HepG2 (cell line): ENCODE measurements at regions of chr6 and their contacts with region 1.

Region 1: DNA sequence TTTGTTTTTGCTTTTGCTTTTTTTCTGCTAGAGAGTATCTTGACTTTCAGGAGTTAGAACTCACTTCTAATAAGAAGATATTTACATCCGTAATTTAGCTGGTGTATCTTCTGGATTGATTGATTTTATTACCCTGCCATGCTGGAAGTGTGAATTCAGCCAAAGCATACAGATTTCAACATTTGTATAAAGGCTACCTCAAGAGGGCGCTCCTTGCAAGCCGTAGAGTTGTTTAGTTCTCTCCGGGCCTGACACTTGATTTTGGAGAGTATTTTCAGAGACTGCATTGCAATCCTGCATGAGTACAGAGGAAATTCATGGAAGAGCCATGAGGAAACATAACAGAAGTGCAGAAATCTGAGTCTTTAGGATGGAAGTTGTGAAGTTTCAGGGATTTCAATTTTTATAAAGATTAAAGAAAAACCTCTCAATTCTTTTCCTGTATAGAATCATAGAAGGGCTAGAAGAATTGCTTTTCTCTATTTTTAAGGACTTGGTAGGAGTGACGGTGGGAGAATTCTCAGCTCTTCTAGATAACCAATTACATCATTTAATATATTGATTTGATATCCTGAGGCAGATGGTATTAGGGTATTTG is 66.7 kb upstream of the TIAM2 start:
- DNase-seq: peak; percentile 73
- ATAC-seq: peak; percentile 78
- H3K4me3 ChIP-seq: no peak overlapping the region
- H3K27ac ChIP-seq: no peak overlapping the region
- H3K4me1 ChIP-seq: peaks cover 25% of the 10 kb centered on the region
- H3K27me3 ChIP-seq: no peaks in the 10 kb centered on the region
- CTCF ChIP-seq: peak; percentile 93
- EP300 ChIP-seq: no peak
- POLR2A ChIP-seq: no peak
- RAD21 ChIP-seq: peak; percentile 95

Region 2: DNA sequence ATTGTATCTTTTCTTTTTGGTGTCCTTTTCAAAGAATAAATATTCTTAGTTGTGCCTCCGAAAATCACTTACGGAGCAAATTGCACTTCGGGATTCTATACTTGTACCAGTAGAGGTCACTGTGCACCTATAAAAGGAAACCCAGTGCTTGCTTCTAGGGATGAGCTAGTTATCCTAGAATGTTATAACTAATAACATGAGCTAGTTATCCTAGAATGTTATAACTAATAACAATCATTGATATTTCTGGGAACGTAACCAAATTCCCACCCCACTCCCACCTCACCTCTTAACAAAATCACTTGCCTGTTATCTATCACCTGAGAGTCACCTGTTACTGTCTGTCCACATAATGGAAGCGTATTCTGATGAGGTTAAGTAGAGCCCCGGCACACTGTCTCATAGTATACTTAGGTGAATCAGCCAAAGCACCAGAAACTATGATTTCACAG is 60.3 kb before region 1 on chr6:
- CTCF ChIA-PET with region 1: interaction called, 6 read pairs
- POLR2A ChIA-PET with region 1: no interaction called
- in situ Hi-C with region 1: no loop called
- intact Hi-C with region 1: loop called (anchors 1 kb)
- DNase-seq: peak; percentile 79
- ATAC-seq: peak; percentile 41
- H3K4me3 ChIP-seq: no peak overlapping the region
- H3K27ac ChIP-seq: no peak overlapping the region
- H3K4me1 ChIP-seq: peaks cover 15% of the 10 kb centered on the region
- H3K27me3 ChIP-seq: no peaks in the 10 kb centered on the region
- CTCF ChIP-seq: peak; percentile 79
- EP300 ChIP-seq: no peak
- POLR2A ChIP-seq: no peak
- RAD21 ChIP-seq: peak; percentile 80

Region 3: DNA sequence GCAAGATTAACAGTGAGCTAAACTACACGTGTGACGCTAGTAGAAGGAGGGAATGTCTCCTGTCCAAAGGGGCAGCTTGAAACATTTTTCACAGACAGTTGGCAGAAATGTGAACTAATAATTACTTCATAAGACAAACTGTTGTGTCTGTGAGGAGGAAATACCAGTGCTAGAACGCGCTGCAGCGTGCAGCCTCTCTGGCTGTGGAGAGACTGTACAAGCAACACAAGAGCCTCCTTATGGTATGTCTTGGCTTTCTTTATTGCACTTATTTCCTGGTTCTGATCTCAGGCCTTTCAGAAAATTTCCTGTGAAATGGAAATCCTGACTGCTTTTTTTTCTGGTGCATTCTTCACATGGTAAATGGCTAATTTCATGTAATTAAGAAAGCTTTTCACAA is 41.4 kb after region 1 on chr6:
- CTCF ChIA-PET with region 1: no interaction called
- POLR2A ChIA-PET with region 1: no interaction called
- in situ Hi-C with region 1: no loop called
- intact Hi-C with region 1: no loop called
- DNase-seq: no peak
- ATAC-seq: no peak; the same call in 2 of the 3 replicates
- H3K4me3 ChIP-seq: no peak overlapping the region
- H3K27ac ChIP-seq: no peak overlapping the region
- H3K4me1 ChIP-seq: peaks cover 16% of the 10 kb centered on the region
- H3K27me3 ChIP-seq: no peaks in the 10 kb centered on the region
- CTCF ChIP-seq: no peak
- EP300 ChIP-seq: no peak
- POLR2A ChIP-seq: no peak
- RAD21 ChIP-seq: no peak

Region 4: DNA sequence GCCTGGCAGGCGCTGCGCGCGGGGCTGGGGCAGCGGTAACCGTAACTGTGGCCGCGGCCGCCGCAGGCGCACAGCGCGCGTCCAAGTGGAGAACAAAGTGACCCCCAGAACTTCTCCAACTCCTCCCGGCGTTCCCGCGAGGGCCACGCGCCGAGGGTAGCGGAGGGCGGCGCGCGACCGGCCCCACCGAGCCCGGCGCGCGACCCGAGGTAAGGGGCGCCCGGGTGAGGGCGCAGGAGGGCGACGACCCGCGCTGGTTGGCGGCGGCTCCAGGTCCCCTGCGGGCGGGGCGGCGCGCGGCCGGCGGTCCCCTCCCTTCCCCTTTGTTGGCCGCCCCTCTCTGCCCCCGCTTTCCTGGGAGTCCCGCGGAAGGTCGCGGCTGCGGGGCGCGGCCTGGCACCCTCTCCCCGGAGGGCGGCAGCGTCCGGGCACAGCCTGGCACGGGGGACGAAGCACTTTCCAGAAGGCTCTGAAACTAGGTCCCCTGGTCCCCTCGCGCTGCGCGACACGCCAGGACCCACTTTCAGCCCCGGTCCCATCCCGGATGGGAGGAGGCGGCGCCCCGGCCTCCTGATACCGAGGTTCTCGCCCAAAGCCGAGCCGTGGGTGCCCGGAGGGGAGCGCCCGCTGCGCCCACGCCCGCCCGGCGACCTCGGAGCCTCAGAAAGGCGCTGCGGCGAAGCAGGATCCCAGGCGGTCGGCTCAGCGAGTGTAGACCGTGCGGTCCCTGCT is 67.0 kb after region 1 on chr6 and contains the start of gene TIAM2:
- CTCF ChIA-PET with region 1: interaction called, 3 read pairs
- POLR2A ChIA-PET with region 1: no interaction called
- in situ Hi-C with region 1: no loop called
- intact Hi-C with region 1: loop called (anchors 2 kb)
- DNase-seq: no peak
- ATAC-seq: peak; percentile 82
- H3K4me3 ChIP-seq: peak within 1 kb of the TSS; percentile 63 to 80 (median 72)
- H3K27ac ChIP-seq: no peak within 1 kb of the TSS
- H3K4me1 ChIP-seq: peaks cover 32% of the 10 kb centered on the region
- H3K27me3 ChIP-seq: peaks cover 2 to 19% of the 10 kb centered on the region in 2 experiments; a peak in 3 of 5 replicates
- CTCF ChIP-seq: no peak; the same call in 1 of the 2 replicates
- EP300 ChIP-seq: no peak
- POLR2A ChIP-seq: no peak
- RAD21 ChIP-seq: peak; percentile 16; the same call in 1 of the 2 replicates
- total RNA-seq, gene TIAM2: 4.5 and 5.7 TPM in 2 replicates

Region 5: DNA sequence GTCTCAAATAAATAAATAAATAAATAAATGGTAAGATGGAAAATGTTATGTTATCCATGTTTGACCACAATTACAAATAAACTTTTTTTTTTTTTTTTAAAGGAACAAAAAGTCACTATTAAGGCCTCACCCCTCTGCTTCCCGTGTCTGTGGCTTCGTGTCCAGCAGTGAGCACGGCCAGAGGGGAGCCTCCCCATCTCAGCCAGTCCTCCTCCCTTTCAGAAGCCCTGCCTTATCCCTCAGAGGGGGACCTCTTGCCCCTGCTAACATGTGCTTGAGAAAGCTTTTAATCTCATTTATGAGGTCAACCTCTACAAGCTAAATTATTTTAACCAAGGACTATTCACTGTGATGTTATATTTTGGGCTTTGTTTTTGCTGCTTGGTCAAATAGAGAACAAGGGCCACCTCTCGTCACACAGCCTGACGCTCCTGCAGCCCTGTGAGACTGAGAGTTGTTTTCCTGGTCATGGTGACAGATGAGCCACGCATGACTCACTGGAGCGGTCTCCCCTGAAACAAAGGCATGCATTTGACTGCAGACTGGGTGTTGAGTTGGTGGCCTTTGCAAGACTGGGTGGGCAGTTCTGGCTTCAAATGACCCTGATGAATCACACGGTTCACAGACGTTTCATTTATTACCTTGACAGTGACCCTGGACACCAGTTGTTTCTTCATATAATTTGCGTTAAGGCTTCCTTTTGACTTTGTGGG is 198.5 kb after region 1 on chr6:
- CTCF ChIA-PET with region 1: no interaction called
- POLR2A ChIA-PET with region 1: no interaction called
- in situ Hi-C with region 1: no loop called
- intact Hi-C with region 1: loop called (anchors 1 kb)
- DNase-seq: peak; percentile 93
- ATAC-seq: peak; percentile 89
- H3K4me3 ChIP-seq: no peak overlapping the region
- H3K27ac ChIP-seq: no peak overlapping the region
- H3K4me1 ChIP-seq: peaks cover 26% of the 10 kb centered on the region
- H3K27me3 ChIP-seq: no peaks in the 10 kb centered on the region
- CTCF ChIP-seq: no peak
- EP300 ChIP-seq: peak; percentile 13 to 34; a peak in 1 of 4 replicates
- POLR2A ChIP-seq: no peak
- RAD21 ChIP-seq: no peak

Region 6: DNA sequence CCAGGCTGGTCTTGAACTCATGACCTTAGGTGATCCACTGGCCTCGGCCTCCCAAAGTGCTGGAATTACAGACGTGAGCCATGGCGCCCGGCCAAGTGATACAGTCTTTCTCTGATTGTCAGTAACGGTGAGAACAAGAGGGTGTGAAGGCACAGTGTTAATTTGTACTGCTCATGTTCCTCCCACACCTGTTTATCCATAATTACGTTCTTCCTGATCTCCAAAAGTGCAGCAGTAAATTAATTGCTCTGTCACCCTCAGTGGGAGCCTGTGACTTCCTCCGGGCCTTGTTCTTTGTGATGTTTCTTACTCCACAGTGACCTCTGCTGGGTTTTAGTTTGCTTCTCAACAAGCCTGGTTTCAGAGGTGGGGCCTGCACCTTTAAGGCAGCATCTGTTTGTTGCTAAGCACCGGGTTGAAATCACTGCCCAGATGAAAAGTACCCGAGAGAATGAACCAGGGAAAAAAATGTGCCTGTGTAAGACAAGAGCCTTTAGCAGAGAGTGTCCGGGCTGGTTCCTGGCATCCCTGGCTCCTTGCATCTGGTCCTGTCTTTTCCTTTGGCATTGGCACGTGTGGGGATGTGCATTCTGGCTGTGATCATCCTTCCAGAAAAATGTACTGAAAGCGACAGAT is 246.3 kb after region 1 on chr6:
- CTCF ChIA-PET with region 1: interaction called, 35 read pairs
- POLR2A ChIA-PET with region 1: no interaction called
- in situ Hi-C with region 1: loop called (anchors 5 kb)
- intact Hi-C with region 1: loop called (anchors 1 kb)
- DNase-seq: peak; percentile 82
- ATAC-seq: peak; percentile 96
- H3K4me3 ChIP-seq: no peak overlapping the region
- H3K27ac ChIP-seq: no peak overlapping the region
- H3K4me1 ChIP-seq: peaks cover 7% of the 10 kb centered on the region; the same call in 1 of the 2 replicates
- H3K27me3 ChIP-seq: no peaks in the 10 kb centered on the region
- CTCF ChIP-seq: peak; percentile 90
- EP300 ChIP-seq: no peak
- POLR2A ChIP-seq: no peak
- RAD21 ChIP-seq: peak; percentile 72

Region 7: GRCh38 chr6:156068881-156069280 is 1140.5 kb after region 1 on chr6:
- CTCF ChIA-PET with region 1: no interaction called
- POLR2A ChIA-PET with region 1: no interaction called
- in situ Hi-C with region 1: no loop called
- intact Hi-C with region 1: loop called (anchors 10 kb)
- DNase-seq: no peak
- ATAC-seq: no peak
- H3K4me3 ChIP-seq: no peak overlapping the region
- H3K27ac ChIP-seq: no peak overlapping the region
- H3K4me1 ChIP-seq: no peaks in the 10 kb centered on the region
- H3K27me3 ChIP-seq: peaks cover 0 to 7% of the 10 kb centered on the region in 2 experiments; a peak in 1 of 5 replicates
- CTCF ChIP-seq: no peak
- EP300 ChIP-seq: no peak
- POLR2A ChIP-seq: no peak
- RAD21 ChIP-seq: no peak